Activated CD4-positive, alpha-beta T cell treated with anti-CD3 and anti-CD28 coated beads for 36 hours (primary cell): ENCODE measurements at regions of chr4 and their contacts with region 1.

Region 1: DNA sequence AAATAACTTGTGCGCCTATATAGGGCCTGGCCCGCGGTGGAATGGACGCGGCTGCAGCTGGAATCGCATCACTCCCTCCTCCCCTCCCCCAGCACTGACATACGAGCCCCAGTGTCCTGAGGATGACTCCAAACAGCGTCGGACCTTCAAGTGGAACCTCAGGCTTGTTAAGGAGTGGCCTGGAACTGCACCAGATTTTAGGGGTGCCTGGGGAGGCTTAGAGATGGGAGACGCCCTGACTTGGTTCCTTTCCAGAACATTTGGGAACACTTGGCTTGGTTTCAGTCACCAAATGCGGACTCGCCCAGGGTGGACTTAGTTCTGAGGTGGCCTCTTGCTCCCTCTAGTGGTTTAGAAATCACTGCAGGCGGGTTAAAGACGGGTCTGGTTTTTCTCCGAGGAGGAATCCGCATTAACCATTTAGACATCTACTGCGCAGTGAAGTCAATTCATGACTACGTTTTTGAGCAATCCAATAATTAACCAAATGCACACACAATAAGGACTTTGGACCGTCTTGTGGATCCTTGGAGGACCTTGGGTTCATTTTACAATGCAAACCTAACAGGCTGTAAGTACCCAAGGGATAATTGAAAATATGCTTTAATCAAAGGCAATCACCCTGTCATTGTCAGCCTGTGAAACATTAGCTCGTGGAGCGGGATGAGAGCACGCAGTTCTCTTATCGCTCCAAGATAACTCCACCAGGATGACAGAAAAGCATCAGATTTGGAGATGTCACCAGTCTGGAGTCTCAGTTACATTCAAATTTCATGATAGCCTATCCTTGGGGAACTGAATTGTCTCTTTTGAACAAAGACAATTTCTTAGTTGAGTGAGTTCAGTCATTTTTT is 11.2 kb upstream of the PDGFRA start:
- DNase-seq: peak; percentile 68
- ATAC-seq: peak; percentile 89
- H3K4me3 Mint-ChIP-seq: peak overlapping the region; percentile 45
- H3K27ac Mint-ChIP-seq: no peak overlapping the region
- H3K4me1 Mint-ChIP-seq: peaks cover 3% of the 10 kb centered on the region
- H3K27me3 Mint-ChIP-seq: peaks cover 27% of the 10 kb centered on the region

Region 2: GRCh38 chr4:53908661-53909078 is 309.2 kb before region 1 on chr4:
- CTCF ChIA-PET with region 1: interaction called, 23 read pairs
- POLR2A ChIA-PET with region 1: no interaction called
- intact Hi-C with region 1: loop called (anchors 1 kb)
- DNase-seq: no peak
- ATAC-seq: peak; percentile 60
- H3K4me3 Mint-ChIP-seq: no peak overlapping the region
- H3K27ac Mint-ChIP-seq: no peak overlapping the region
- H3K4me1 Mint-ChIP-seq: peaks cover 13% of the 10 kb centered on the region
- H3K27me3 Mint-ChIP-seq: peaks cover 45% of the 10 kb centered on the region